Colonic mucosa (tissue), 4 donors: ENCODE measurements at regions of chr12 and their contacts with region 1.

Region 1: DNA sequence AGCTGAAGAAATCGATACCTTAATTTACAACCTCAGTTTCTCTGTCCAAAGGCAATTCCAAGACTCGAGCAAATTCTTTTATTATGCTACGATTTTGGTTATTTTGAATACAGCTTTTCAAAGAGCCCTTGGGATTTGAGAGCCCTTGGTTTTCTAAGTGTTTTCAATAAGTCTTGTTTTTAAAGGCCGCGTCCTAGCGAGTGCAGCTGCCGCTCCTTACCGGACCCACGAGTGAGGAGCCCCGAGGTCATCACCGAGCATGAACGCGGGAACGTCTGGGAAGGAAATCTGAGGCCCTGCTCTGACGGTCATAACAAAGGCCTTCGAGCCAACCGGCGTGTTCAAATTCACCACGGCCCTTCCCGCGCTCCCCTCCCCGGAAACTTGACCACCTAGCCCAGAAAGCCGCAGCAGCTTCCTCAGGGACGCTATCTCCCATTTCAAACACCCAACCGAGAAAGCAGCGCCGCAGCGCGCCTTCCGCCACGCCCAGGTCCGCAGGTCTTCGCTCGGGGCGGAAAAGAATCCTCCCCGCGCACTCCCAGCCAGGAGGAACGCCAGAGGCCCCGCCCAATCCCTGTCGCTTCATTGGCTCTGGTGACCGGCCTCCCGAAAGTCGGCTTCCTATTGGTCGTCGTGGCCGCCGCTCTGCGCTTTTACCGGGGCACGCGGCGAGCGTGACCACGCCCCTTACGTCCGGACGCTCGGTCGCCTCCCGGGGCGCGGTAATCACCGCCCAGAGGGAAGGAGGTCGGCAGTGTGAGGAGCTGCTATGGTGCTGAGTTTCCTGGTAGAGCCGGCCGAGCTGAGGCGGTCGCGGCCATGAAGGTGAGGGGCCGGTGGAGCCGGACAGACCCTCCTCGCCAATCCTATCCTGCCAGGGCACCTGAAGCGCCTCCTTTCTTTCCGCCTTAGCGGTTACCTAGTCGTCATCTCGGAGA is at the start of gene RNF34:
- DNase-seq: peak; percentile 99
- H3K4me3 ChIP-seq: peak within 1 kb of the TSS; percentile 96
- H3K27ac ChIP-seq: peak within 1 kb of the TSS; percentile 94
- H3K4me1 ChIP-seq: no peaks in the 10 kb centered on the region
- H3K27me3 ChIP-seq: no peaks in the 10 kb centered on the region
- CTCF ChIP-seq: no peak
- total RNA-seq, gene RNF34: 39.7 to 53.3 TPM

Region 2: DNA sequence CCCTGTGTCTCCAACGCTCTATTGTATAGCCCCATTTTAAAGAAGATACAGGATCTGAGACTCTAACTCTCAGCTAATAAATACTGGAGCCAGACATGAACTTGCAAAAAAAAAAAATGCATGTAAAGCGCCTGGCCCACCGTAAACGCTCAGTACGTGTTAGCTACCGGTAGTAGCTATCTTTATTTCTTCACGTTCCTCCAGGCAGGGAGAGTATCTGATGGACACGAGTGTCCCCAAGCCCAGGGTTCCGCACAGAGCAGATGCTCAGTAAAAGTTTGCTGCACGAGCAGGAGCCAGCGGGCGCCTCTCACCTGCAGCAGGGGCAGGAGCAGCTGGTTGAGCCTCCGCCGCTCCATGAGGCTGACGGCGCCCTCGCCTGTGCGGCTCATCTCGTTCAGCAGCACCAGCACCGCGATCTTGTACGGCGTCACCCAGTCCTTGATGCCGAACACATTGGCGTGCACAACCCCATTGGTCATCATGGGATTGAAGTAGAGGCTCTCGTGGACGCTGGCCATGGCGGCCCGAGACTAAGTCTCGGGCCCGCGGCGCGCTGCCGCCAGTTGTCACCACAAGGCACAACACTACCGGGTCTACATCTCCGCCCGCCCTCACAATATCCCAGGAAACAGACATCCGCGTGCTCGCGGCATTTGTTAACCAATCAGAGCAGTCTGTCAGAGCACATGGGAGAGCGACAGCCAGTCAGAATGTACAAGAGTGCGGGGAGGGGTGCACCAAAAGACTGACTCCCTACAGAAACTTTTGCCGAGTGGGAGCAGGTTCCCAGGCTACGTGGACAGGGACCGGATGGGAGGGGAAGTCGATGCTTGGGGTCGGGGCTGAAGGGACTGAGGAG is 47.6 kb before region 1 on chr12 and contains the start of gene ANAPC5:
- intact Hi-C with region 1: loop called (anchors 5 kb)
- DNase-seq: peak; percentile 96
- H3K4me3 ChIP-seq: peak within 1 kb of the TSS; percentile 95
- H3K27ac ChIP-seq: peak within 1 kb of the TSS; percentile 88
- H3K4me1 ChIP-seq: no peaks in the 10 kb centered on the region
- H3K27me3 ChIP-seq: no peaks in the 10 kb centered on the region
- CTCF ChIP-seq: no peak
- total RNA-seq, gene ANAPC5: 70.6 to 86.2 TPM